ENCODE measurements at regions of chr14 and their contacts with region 1.

Region 1: GRCh38 chr14:67819563-67820421 is at the start of gene RAD51B:
- DNase-seq: peak in 1 of 2 experiments; percentile 91
- H3K4me3 ChIP-seq: peak within 1 kb of the TSS; percentile 64 to 97 (median 89)
- H3K27ac ChIP-seq: peak within 1 kb of the TSS; percentile 90
- H3K4me1 ChIP-seq: peaks cover 0 to 14% (median 3%) of the 10 kb centered on the region in 4 experiments; a peak in 6 of 7 replicates
- H3K27me3 ChIP-seq: no peaks in the 10 kb centered on the region
- CTCF ChIP-seq: no peak
- EP300 ChIP-seq: no peak
- POLR2A ChIP-seq: 0 out of 3 replicates have a peak, but pooled peaks of 1 of the 2 experiments have one; percentile 37
- RAD21 ChIP-seq: no peak
- total RNA-seq, gene RAD51B: 11.0 and 14.9 TPM in 2 replicates

Region 2: GRCh38 chr14:67798731-67799130 is 21.1 kb before region 1 on chr14:
- CTCF ChIA-PET with region 1: no interaction called
- POLR2A ChIA-PET with region 1: no interaction called
- DNase-seq: no peak
- H3K4me3 ChIP-seq: no peak overlapping the region
- H3K27ac ChIP-seq: no peak overlapping the region
- H3K4me1 ChIP-seq: no peaks in the 10 kb centered on the region
- H3K27me3 ChIP-seq: no peaks in the 10 kb centered on the region
- CTCF ChIP-seq: no peak
- EP300 ChIP-seq: no peak
- POLR2A ChIP-seq: no peak
- RAD21 ChIP-seq: no peak

Region 3: GRCh38 chr14:67837011-67837624 is 17.3 kb after region 1 on chr14:
- CTCF ChIA-PET with region 1: interaction called, 10 read pairs
- POLR2A ChIA-PET with region 1: interaction called, 4 read pairs
- DNase-seq: no peak
- H3K4me3 ChIP-seq: no peak overlapping the region
- H3K27ac ChIP-seq: no peak overlapping the region
- H3K4me1 ChIP-seq: no peaks in the 10 kb centered on the region
- H3K27me3 ChIP-seq: no peaks in the 10 kb centered on the region
- CTCF ChIP-seq: peak in 2 of 3 experiments; percentile 39 to 44; a peak in 2 of 4 replicates
- EP300 ChIP-seq: no peak
- POLR2A ChIP-seq: no peak
- RAD21 ChIP-seq: peak; percentile 76 to 77

Region 4: GRCh38 chr14:68191567-68192321 is 372.0 kb after region 1 on chr14:
- CTCF ChIA-PET with region 1: no interaction called
- POLR2A ChIA-PET with region 1: no interaction called
- DNase-seq: no peak
- H3K4me3 ChIP-seq: no peak overlapping the region
- H3K27ac ChIP-seq: no peak overlapping the region
- H3K4me1 ChIP-seq: peaks cover 0 to 4% (median 2%) of the 10 kb centered on the region in 4 experiments; a peak in 3 of 7 replicates
- H3K27me3 ChIP-seq: no peaks in the 10 kb centered on the region
- CTCF ChIP-seq: no peak
- EP300 ChIP-seq: no peak
- POLR2A ChIP-seq: no peak
- RAD21 ChIP-seq: no peak

Measured in H1 (cell line).